HepG2 (cell line): ENCODE measurements at regions of chr2 and their contacts with region 1.

Region 1: GRCh38 chr2:157876066-157876787 is at the start of gene ACVR1:
- DNase-seq: peak; percentile 95
- ATAC-seq: peak; percentile 91
- H3K4me3 ChIP-seq: peak within 1 kb of the TSS; percentile 86 to 98 (median 94)
- H3K27ac ChIP-seq: peak within 1 kb of the TSS; percentile 61
- H3K4me1 ChIP-seq: peaks cover 46% of the 10 kb centered on the region
- H3K27me3 ChIP-seq: peaks cover 0 to 13% of the 10 kb centered on the region in 2 experiments; a peak in 1 of 5 replicates
- CTCF ChIP-seq: peak; percentile 44
- EP300 ChIP-seq: peak in 1 of 2 experiments; percentile 37; a peak in 2 of 4 replicates
- POLR2A ChIP-seq: peak in 1 of 2 experiments; percentile 59; a peak in 1 of 4 replicates
- RAD21 ChIP-seq: peak; percentile 84; the same call in 1 of the 2 replicates
- total RNA-seq, gene ACVR1: 2.3 and 2.8 TPM in 2 replicates

Region 2: GRCh38 chr2:157327621-157328500 is 548.4 kb before region 1 on chr2:
- CTCF ChIA-PET with region 1: no interaction called
- POLR2A ChIA-PET with region 1: no interaction called
- in situ Hi-C with region 1: no loop called
- intact Hi-C with region 1: no loop called
- DNase-seq: peak; percentile 44
- ATAC-seq: peak; percentile 100
- H3K4me3 ChIP-seq: no peak overlapping the region
- H3K27ac ChIP-seq: no peak overlapping the region
- H3K4me1 ChIP-seq: no peaks in the 10 kb centered on the region
- H3K27me3 ChIP-seq: no peaks in the 10 kb centered on the region
- CTCF ChIP-seq: peak; percentile 89
- EP300 ChIP-seq: no peak
- POLR2A ChIP-seq: no peak
- RAD21 ChIP-seq: 0 out of 2 replicates have a peak, but pooled peaks have one; percentile 11

Region 3: DNA sequence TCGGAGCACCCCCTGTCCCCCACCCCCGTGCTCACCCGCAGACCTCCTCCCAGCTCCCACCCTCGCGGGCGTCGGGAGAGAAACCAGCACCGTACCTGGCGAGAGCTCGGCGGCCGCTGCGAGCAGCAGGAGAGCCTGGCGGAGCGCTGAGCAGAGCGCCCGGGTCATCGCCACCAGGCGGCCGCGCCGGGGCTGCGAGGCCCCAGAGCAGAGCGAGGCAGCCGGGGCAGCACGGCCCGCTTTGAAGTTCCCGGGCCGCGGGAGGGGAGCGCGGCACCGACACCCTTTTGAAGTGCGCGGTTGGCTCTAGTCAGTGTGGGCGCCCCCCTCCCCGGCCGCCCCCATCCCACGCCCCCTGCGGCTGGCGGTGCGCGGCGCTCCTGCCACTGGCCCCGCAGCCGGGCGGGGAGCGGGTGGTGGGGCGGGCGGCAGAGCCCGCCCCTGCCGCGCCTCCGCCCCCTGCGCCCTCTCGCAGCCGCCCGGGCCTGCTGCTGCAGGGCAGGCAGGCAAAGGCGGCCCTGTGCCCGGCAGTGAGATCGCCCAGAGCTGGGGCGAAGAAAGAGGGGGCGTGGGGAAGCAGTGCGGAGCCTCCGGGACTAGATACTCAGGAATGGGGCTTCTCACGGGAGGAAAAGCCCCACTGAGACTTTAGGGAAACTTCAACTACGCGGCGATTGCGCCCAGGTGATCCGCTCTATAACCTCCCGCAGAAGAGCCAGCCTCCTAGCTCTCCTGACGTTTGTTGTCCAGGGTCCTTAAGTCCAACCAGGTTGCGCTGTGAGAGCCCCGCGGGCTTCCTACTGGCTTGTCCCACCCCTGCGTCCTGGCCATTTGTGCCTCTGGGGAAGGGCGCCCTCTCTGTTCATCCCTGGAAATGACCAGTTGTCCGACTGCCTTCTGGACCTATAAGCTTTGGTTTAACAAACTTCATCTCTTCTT is 247.5 kb before region 1 on chr2 and contains the start of gene ACVR1C:
- CTCF ChIA-PET with region 1: no interaction called
- POLR2A ChIA-PET with region 1: no interaction called
- in situ Hi-C with region 1: no loop called
- intact Hi-C with region 1: loop called (anchors 10 kb)
- DNase-seq: peak; percentile 84
- ATAC-seq: peak; percentile 96
- H3K4me3 ChIP-seq: peak within 1 kb of the TSS; percentile 53 to 72 (median 60)
- H3K27ac ChIP-seq: no peak within 1 kb of the TSS
- H3K4me1 ChIP-seq: peaks cover 10% of the 10 kb centered on the region
- H3K27me3 ChIP-seq: peaks cover 0 to 26% of the 10 kb centered on the region in 2 experiments; a peak in 2 of 5 replicates
- CTCF ChIP-seq: peak; percentile 66
- EP300 ChIP-seq: 0 out of 4 replicates have a peak, but pooled peaks of 1 of the 2 experiments have one; percentile 7
- POLR2A ChIP-seq: no peak
- RAD21 ChIP-seq: peak; percentile 70
- total RNA-seq, gene ACVR1C: 0.59 and 1.0 TPM in 2 replicates

Region 4: GRCh38 chr2:157777427-157777826 is 98.8 kb before region 1 on chr2:
- CTCF ChIA-PET with region 1: interaction called, 3 read pairs
- POLR2A ChIA-PET with region 1: no interaction called
- in situ Hi-C with region 1: no loop called
- intact Hi-C with region 1: loop called (anchors 1 kb)
- DNase-seq: peak; percentile 55
- ATAC-seq: peak; percentile 37; the same call in 1 of the 3 replicates
- H3K4me3 ChIP-seq: no peak overlapping the region
- H3K27ac ChIP-seq: no peak overlapping the region
- H3K4me1 ChIP-seq: peaks cover 12% of the 10 kb centered on the region
- H3K27me3 ChIP-seq: no peaks in the 10 kb centered on the region
- CTCF ChIP-seq: peak; percentile 65
- EP300 ChIP-seq: no peak
- POLR2A ChIP-seq: no peak
- RAD21 ChIP-seq: peak; percentile 78

Region 5: GRCh38 chr2:157838442-157839161 is 37.6 kb before region 1 on chr2:
- CTCF ChIA-PET with region 1: no interaction called
- POLR2A ChIA-PET with region 1: interaction called, 26 read pairs
- in situ Hi-C with region 1: no loop called
- intact Hi-C with region 1: loop called (anchors 1 kb)
- DNase-seq: peak; percentile 88
- ATAC-seq: peak; percentile 87
- H3K4me3 ChIP-seq: peak overlapping the region; percentile 53 to 63 (median 55); a peak in 5 of 6 replicates
- H3K27ac ChIP-seq: peak overlapping the region; percentile 85
- H3K4me1 ChIP-seq: peaks cover 76% of the 10 kb centered on the region
- H3K27me3 ChIP-seq: no peaks in the 10 kb centered on the region
- CTCF ChIP-seq: no peak
- EP300 ChIP-seq: peak in 1 of 2 experiments; percentile 75; a peak in 2 of 4 replicates
- POLR2A ChIP-seq: peak; percentile 37 to 51; a peak in 3 of 4 replicates
- RAD21 ChIP-seq: no peak

Region 6: GRCh38 chr2:157866202-157866601 is 10.0 kb before region 1 on chr2:
- CTCF ChIA-PET with region 1: no interaction called
- POLR2A ChIA-PET with region 1: interaction called, 17 read pairs
- in situ Hi-C with region 1: no loop called
- intact Hi-C with region 1: no loop called
- DNase-seq: no peak
- ATAC-seq: no peak; the same call in 2 of the 3 replicates
- H3K4me3 ChIP-seq: no peak overlapping the region
- H3K27ac ChIP-seq: no peak overlapping the region
- H3K4me1 ChIP-seq: peaks cover 25% of the 10 kb centered on the region
- H3K27me3 ChIP-seq: no peaks in the 10 kb centered on the region
- CTCF ChIP-seq: no peak
- EP300 ChIP-seq: no peak
- POLR2A ChIP-seq: no peak
- RAD21 ChIP-seq: no peak

Region 7: GRCh38 chr2:157911750-157912149 is 35.5 kb after region 1 on chr2:
- CTCF ChIA-PET with region 1: no interaction called
- POLR2A ChIA-PET with region 1: no interaction called
- in situ Hi-C with region 1: no loop called
- intact Hi-C with region 1: no loop called
- DNase-seq: no peak
- ATAC-seq: no peak
- H3K4me3 ChIP-seq: no peak overlapping the region
- H3K27ac ChIP-seq: no peak overlapping the region
- H3K4me1 ChIP-seq: no peaks in the 10 kb centered on the region
- H3K27me3 ChIP-seq: no peaks in the 10 kb centered on the region; a peak in 2 of 5 replicates
- CTCF ChIP-seq: no peak
- EP300 ChIP-seq: no peak
- POLR2A ChIP-seq: no peak
- RAD21 ChIP-seq: no peak

Region 8: DNA sequence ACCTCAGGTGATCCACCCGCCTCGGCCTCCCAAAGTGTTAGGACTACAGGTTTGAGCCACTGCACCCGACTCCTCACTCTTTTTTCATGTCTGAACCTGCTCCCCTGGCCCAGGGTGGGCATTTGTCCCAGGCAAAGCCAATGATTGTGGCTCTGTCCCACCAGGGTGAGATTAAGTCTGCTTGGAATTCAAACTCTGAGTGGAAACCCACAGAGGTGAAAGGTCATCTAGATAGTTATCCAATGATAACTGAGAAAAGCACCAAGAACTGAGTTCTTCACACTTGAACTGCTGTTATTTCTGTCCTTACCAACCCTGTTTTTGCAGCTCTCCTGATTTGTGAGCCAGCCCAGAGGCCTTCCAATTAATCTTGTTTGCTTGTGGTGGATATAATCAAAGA is 62.3 kb after region 1 on chr2:
- CTCF ChIA-PET with region 1: no interaction called
- POLR2A ChIA-PET with region 1: no interaction called
- in situ Hi-C with region 1: no loop called
- intact Hi-C with region 1: loop called (anchors 2 kb)
- DNase-seq: no peak
- ATAC-seq: peak; percentile 61
- H3K4me3 ChIP-seq: no peak overlapping the region; a peak in 1 of 6 replicates
- H3K27ac ChIP-seq: no peak overlapping the region
- H3K4me1 ChIP-seq: peaks cover 12% of the 10 kb centered on the region
- H3K27me3 ChIP-seq: peaks cover 0 to 6% of the 10 kb centered on the region in 2 experiments; a peak in 1 of 5 replicates
- CTCF ChIP-seq: no peak
- EP300 ChIP-seq: no peak
- POLR2A ChIP-seq: no peak
- RAD21 ChIP-seq: no peak